Ovary (tissue), 10 donors: ENCODE measurements at regions of chr11 and their contacts with region 1.

Region 1: GRCh38 chr11:47539681-47540038 is 13.3 kb downstream of the CELF1 start:
- DNase-seq: no peak
- H3K4me3 ChIP-seq: no peak overlapping the region
- H3K27ac ChIP-seq: no peak overlapping the region
- H3K4me1 ChIP-seq: peaks cover 13% of the 10 kb centered on the region
- H3K27me3 ChIP-seq: no peaks in the 10 kb centered on the region
- CTCF ChIP-seq: no peak
- EP300 ChIP-seq: no peak
- POLR2A ChIP-seq: no peak

Region 2: DNA sequence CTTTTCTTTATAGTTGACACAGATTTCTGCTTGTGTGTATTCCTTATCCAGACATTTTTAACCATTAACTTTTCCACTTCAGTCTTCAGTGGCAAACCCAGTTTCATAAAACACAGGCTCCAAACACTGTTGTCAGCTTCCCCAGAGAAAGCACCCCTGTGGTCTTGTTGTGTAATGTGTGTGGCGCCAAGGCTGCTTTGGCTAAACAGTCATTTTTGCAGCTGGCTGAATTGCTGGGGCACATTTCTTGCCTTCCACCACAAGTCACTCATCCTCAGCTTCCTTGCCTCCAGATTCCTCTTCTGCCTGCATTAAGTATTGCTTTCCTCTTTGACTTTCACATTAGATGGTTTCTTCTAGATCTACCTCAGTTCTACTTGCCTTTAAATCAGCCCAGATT is 879.8 kb before region 1 on chr11:
- intact Hi-C with region 1: no loop called
- DNase-seq: no peak
- H3K4me3 ChIP-seq: no peak overlapping the region
- H3K27ac ChIP-seq: no peak overlapping the region
- H3K4me1 ChIP-seq: no peaks in the 10 kb centered on the region
- H3K27me3 ChIP-seq: no peaks in the 10 kb centered on the region
- CTCF ChIP-seq: no peak
- EP300 ChIP-seq: no peak
- POLR2A ChIP-seq: no peak

Region 3: GRCh38 chr11:47480762-47481161 is 58.9 kb before region 1 on chr11:
- intact Hi-C with region 1: loop called in 1 of 4 experiments (anchors 10 kb)
- DNase-seq: no peak
- H3K4me3 ChIP-seq: no peak overlapping the region
- H3K27ac ChIP-seq: no peak overlapping the region
- H3K4me1 ChIP-seq: no peaks in the 10 kb centered on the region
- H3K27me3 ChIP-seq: no peaks in the 10 kb centered on the region
- CTCF ChIP-seq: no peak
- EP300 ChIP-seq: no peak
- POLR2A ChIP-seq: no peak